ENCODE measurements at regions of chr22 and their contacts with region 1.

Region 1: GRCh38 chr22:20156611-20157429 is 6.0 kb upstream of the CCDC188 start:
- DNase-seq: peak; percentile 85 to 87
- H3K4me3 ChIP-seq: no peak overlapping the region
- H3K27ac ChIP-seq: no peak overlapping the region
- H3K4me1 ChIP-seq: no peaks in the 10 kb centered on the region
- H3K27me3 ChIP-seq: no peaks in the 10 kb centered on the region
- CTCF ChIP-seq: peak; percentile 99 to 100 (median 100)
- POLR2A ChIP-seq: peak in 1 of 2 donors; percentile 33

Region 2: DNA sequence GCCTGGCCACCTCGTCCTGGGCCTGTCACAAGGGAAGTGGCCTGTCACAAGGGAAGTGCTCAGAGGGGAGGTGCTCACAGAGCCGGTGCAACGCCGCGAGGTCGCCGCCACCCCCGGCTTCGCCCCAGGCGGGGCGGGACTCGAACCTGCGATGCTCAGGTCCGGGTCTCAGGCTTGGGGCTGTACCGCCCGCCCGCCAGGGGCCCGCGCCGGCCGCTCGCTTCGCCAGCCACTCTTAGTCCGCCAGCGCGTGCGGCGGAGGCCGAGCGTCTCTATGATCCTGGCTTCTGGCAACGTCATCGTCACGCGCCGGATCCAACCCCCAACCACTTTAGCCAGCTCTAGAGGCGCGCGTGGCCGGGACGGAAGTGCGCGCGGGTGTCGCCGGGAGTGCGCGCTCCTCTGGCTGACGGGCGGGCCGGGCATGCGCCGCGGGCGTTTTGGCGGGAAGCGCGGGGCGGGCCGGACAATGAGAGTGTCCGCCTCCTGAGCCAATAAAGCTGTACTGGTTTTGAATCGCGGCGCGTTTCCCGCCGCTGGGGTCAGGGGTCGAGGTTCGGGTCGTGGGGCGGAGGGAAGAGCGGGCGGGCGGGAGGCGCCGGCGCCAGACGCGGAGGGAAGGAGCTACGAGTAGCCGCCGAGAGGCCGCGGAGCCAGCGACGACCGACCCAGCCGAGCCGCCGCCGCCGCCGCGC is 39.7 kb before region 1 on chr22 and contains the start of gene TRMT2A:
- intact Hi-C with region 1: no loop called
- DNase-seq: peak; percentile 98 to 99
- H3K4me3 ChIP-seq: peak within 1 kb of the TSS; percentile 51 to 95
- H3K27ac ChIP-seq: peak within 1 kb of the TSS; percentile 75 to 87
- H3K4me1 ChIP-seq: peaks cover 4 to 7% of the 10 kb centered on the region in 2 donors
- H3K27me3 ChIP-seq: no peaks in the 10 kb centered on the region
- CTCF ChIP-seq: peak in 3 of 4 experiments; percentile 9 to 44 (median 22)
- POLR2A ChIP-seq: peak; percentile 58 to 68
- total RNA-seq, gene TRMT2A: 30.9 to 123 (median 45.3) TPM

Region 3: DNA sequence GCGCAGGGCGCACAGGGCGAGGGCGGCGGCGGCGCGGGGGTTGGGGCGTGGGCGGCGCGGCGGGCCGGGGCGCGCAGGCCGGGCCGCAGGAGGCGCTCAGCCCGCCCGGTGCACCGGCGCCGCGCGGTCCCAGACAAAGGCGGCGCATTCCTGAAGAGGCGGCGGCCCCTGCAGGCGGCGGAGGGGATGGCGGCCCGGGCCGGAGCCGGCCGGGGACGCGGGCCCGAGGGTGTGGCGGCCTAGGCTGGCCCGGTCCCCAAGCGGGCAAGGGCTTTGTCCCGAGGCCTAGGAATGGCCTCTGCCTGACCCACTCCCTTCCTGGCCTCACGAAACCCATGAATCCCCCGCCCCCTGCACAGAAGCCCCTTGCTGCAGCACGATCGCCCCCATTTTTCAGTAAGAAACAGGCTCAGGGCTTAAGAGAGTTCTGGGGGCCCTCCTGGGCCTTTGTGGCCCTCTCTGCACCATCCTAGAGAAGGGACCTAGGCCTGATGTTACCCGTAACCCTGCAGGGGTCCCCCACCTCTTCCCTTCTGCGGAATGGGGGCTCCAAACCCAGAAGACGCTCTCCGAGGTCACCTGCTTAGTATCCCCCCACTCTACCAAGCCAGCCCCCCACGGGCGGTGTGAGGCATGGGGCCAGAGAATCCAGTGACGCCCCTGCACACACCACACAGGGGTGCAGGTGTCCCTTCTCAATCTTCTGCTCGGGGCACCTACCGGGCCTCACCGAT is 111.6 kb after region 1 on chr22 and contains the start of gene RTN4R:
- intact Hi-C with region 1: loop called (anchors 2 kb)
- DNase-seq: peak; percentile 41 to 68
- H3K4me3 ChIP-seq: peak within 1 kb of the TSS; percentile 17 to 33
- H3K27ac ChIP-seq: peak within 1 kb of the TSS; percentile 0 to 68
- H3K4me1 ChIP-seq: peaks cover 0 to 11% of the 10 kb centered on the region in 2 donors
- H3K27me3 ChIP-seq: no peaks in the 10 kb centered on the region
- CTCF ChIP-seq: peak; percentile 36 to 97 (median 86)
- POLR2A ChIP-seq: no peak
- total RNA-seq, gene RTN4R: 5.0 to 12.9 TPM in 2 of 4 donors, not detected in the others

Region 4: DNA sequence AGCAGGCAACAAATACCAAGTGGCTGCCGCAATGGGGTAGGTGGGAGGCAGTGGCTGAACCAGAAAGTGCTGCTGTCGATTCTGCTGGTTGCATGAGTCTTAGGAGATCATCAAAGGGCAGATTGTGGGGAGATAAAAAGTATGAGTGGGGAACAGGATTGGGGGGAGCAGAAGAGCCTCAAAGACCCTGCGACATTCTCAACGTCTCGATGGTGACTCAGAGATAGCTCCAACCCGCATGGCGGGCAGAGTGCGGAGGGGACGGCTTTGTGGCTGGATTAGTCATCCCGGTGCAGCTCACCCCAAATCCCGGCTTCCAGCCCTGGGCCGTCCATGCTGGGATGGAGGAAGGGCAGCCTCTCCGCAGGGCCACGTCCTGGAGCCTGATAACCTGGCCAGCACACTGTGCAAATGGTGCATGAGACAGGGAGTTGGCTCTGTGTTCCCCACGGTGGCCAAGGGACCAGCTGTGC is 122.9 kb after region 1 on chr22:
- intact Hi-C with region 1: loop called (anchors 5 kb)
- DNase-seq: no peak
- H3K4me3 ChIP-seq: no peak overlapping the region
- H3K27ac ChIP-seq: no peak overlapping the region
- H3K4me1 ChIP-seq: no peaks in the 10 kb centered on the region
- H3K27me3 ChIP-seq: no peaks in the 10 kb centered on the region
- CTCF ChIP-seq: no peak
- POLR2A ChIP-seq: no peak